ENCODE measurements at regions of chr11 and their contacts with region 1.

Region 1: GRCh38 chr11:58579192-58580129 is 598 bp downstream of the ZFP91 start:
- DNase-seq: peak; percentile 88
- H3K4me3 Mint-ChIP-seq: peak overlapping the region; percentile 95
- H3K27ac Mint-ChIP-seq: peak overlapping the region; percentile 100
- H3K4me1 Mint-ChIP-seq: peaks cover 48% of the 10 kb centered on the region
- H3K27me3 Mint-ChIP-seq: no peaks in the 10 kb centered on the region

Region 2: GRCh38 chr11:57426929-57427726 is 1152.3 kb before region 1 on chr11 and contains the start of gene SLC43A3:
- intact Hi-C with region 1: loop called (anchors 1 kb)
- DNase-seq: peak; percentile 66
- H3K4me3 Mint-ChIP-seq: peak within 1 kb of the TSS; percentile 91
- H3K27ac Mint-ChIP-seq: peak within 1 kb of the TSS; percentile 64
- H3K4me1 Mint-ChIP-seq: peaks cover 44% of the 10 kb centered on the region
- H3K27me3 Mint-ChIP-seq: peaks cover 3% of the 10 kb centered on the region
- total RNA-seq, gene SLC43A3: 174 and 189 TPM in 2 replicates

Region 3: GRCh38 chr11:57667736-57668435 is 911.6 kb before region 1 on chr11 and contains the start of gene ZDHHC5:
- intact Hi-C with region 1: loop called (anchors 1 kb)
- DNase-seq: peak; percentile 100
- H3K4me3 Mint-ChIP-seq: peak within 1 kb of the TSS; percentile 99
- H3K27ac Mint-ChIP-seq: peak within 1 kb of the TSS; percentile 99
- H3K4me1 Mint-ChIP-seq: peaks cover 29% of the 10 kb centered on the region
- H3K27me3 Mint-ChIP-seq: no peaks in the 10 kb centered on the region
- total RNA-seq, gene ZDHHC5: 64.7 and 69.9 TPM in 2 replicates

Region 4: GRCh38 chr11:58524232-58525036 is 55.0 kb before region 1 on chr11:
- intact Hi-C with region 1: loop called (anchors 1 kb)
- DNase-seq: peak; percentile 29
- H3K4me3 Mint-ChIP-seq: peak overlapping the region; percentile 75
- H3K27ac Mint-ChIP-seq: peak overlapping the region; percentile 88
- H3K4me1 Mint-ChIP-seq: peaks cover 48% of the 10 kb centered on the region
- H3K27me3 Mint-ChIP-seq: no peaks in the 10 kb centered on the region

Region 5: GRCh38 chr11:58629857-58630256 is 50.4 kb after region 1 on chr11:
- intact Hi-C with region 1: loop called (anchors 2 kb)
- DNase-seq: no peak
- H3K4me3 Mint-ChIP-seq: no peak overlapping the region
- H3K27ac Mint-ChIP-seq: peak overlapping the region; percentile 18
- H3K4me1 Mint-ChIP-seq: peaks cover 9% of the 10 kb centered on the region
- H3K27me3 Mint-ChIP-seq: no peaks in the 10 kb centered on the region

Region 6: GRCh38 chr11:58757439-58757838 is 178.0 kb after region 1 on chr11:
- intact Hi-C with region 1: no loop called
- DNase-seq: no peak
- H3K4me3 Mint-ChIP-seq: no peak overlapping the region
- H3K27ac Mint-ChIP-seq: no peak overlapping the region
- H3K4me1 Mint-ChIP-seq: no peaks in the 10 kb centered on the region
- H3K27me3 Mint-ChIP-seq: no peaks in the 10 kb centered on the region

Region 7: DNA sequence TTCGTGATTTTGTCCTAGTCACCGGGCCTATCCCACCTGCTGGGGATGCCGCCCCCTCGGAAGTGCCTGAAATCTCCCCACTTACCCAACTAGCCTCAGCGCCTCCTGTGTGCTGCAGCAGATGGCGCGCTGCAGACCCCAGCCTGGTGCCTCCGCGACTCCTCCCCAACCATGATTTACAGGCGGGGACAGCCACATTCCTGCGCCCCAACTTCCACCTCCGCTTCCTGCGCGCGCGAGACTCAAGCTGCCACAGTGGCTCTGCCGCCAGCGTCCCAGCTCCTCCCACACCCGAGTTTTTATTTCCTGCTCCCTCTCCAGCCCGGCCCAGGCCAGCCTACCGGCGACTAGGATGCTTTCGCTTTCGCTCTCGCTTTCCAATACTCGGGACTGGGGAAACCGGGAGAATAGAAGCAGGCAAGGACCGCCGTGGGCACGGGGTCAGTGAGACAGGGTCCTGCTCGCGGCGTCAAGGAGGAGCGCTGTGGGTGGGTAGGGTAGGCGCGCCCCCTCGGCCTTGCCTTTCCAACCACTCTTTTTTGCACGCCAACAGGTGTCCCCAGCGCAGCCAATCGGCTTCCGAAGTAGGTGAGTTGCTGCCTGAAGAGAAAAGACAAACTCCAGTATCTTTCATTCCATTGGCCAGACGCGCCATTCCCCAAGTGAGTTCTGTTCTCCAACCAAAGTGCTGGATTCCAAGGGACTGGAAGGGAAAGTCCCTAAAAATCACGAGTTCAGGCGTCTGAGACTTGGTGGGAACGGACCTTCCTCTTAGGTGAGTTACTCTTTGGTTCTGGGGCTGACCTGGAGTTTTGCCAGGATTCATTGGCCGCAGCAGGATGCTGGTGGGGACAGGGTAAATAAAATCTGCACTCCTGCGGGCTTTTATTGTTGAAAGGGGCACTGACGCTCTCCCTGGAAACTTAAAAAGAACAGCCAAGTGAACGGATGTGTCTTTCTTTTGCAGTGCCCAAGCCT is 563.4 kb after region 1 on chr11 and contains the start of gene FAM111A:
- intact Hi-C with region 1: loop called (anchors 2 kb)
- DNase-seq: peak; percentile 87
- H3K4me3 Mint-ChIP-seq: peak within 1 kb of the TSS; percentile 94
- H3K27ac Mint-ChIP-seq: peak within 1 kb of the TSS; percentile 95
- H3K4me1 Mint-ChIP-seq: peaks cover 57% of the 10 kb centered on the region
- H3K27me3 Mint-ChIP-seq: no peaks in the 10 kb centered on the region
- total RNA-seq, gene FAM111A: 66.2 and 69.1 TPM in 2 replicates

Measured in activated T-helper 2 cell treated with anti-CD3 and anti-CD28 coated beads, Interferon-gamma antibody, Interleukin-2, Interleukin-4, amounts not matched to agents 10 μg/mL and 5 μg/mL and 100 μg/mL, durations not matched to agents 14 hours and 24 hours and 36 hours (primary cell).